ENCODE measurements at regions of chr15 and their contacts with region 1.

Region 1: DNA sequence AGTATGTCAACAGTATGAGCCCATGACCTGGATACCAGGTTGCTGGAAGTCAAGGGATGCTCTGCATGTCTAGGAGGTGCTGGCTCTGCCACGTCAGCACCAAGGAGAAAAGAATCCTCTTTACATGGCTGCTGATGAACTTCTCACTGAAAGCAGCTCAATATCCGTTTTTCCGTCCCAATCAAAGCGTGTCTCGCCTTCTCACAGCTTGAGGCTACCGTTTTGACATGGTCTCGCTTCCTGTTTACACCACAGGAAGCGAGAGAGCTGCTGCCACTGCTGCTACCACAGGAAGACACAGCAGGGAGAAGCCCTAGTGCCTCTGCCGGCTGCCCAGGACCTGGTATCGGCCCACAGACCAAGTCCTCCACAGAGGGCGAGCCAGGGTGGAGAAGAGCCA is 27.3 kb downstream of the STARD5 start:
- DNase-seq: peak; percentile 76
- H3K4me3 Mint-ChIP-seq: peak overlapping the region; percentile 96
- H3K27ac Mint-ChIP-seq: peak overlapping the region; percentile 93
- H3K4me1 Mint-ChIP-seq: peaks cover 90% of the 10 kb centered on the region
- H3K27me3 Mint-ChIP-seq: no peaks in the 10 kb centered on the region

Region 2: GRCh38 chr15:80804965-80805495 is 491.6 kb before region 1 on chr15:
- intact Hi-C with region 1: loop called (anchors 10 kb)
- DNase-seq: peak; percentile 27
- H3K4me3 Mint-ChIP-seq: peak overlapping the region; percentile 19
- H3K27ac Mint-ChIP-seq: peak overlapping the region; percentile 62
- H3K4me1 Mint-ChIP-seq: peaks cover 49% of the 10 kb centered on the region
- H3K27me3 Mint-ChIP-seq: peaks cover 2% of the 10 kb centered on the region

Region 3: GRCh38 chr15:81023483-81024264 is 273.0 kb before region 1 on chr15:
- intact Hi-C with region 1: loop called (anchors 2 kb)
- DNase-seq: peak; percentile 34
- H3K4me3 Mint-ChIP-seq: peak overlapping the region; percentile 10
- H3K27ac Mint-ChIP-seq: peak overlapping the region; percentile 92
- H3K4me1 Mint-ChIP-seq: peaks cover 35% of the 10 kb centered on the region
- H3K27me3 Mint-ChIP-seq: no peaks in the 10 kb centered on the region

Region 4: GRCh38 chr15:81176291-81176893 is 120.3 kb before region 1 on chr15:
- intact Hi-C with region 1: no loop called
- DNase-seq: no peak
- H3K4me3 Mint-ChIP-seq: no peak overlapping the region
- H3K27ac Mint-ChIP-seq: no peak overlapping the region
- H3K4me1 Mint-ChIP-seq: no peaks in the 10 kb centered on the region
- H3K27me3 Mint-ChIP-seq: peaks cover 17% of the 10 kb centered on the region

Region 5: DNA sequence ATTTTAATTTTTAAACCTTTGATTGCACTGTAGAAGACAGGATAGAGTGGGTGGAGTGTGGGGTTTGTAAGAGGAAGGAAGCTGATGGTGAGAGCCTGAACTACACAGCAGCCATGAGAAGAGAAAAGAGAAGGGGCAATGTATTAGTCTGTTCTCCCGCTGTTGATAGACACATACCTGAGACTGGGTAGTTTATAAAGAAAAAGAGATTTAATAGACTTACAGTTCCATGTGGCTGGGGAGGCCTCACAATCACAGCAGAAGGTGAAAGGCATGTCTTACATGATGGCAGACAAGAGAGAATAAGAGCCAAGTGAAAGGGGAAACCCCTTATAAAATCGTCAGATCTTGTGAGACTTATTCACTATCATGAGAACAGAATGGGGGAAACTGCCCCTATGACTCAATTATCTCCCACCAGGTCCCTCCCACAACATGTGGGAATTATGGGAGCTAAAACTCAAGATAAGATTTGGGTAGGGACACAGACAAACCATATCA is 10.0 kb before region 1 on chr15:
- intact Hi-C with region 1: loop called (anchors 1 kb)
- DNase-seq: no peak
- H3K4me3 Mint-ChIP-seq: peak overlapping the region; percentile 23
- H3K27ac Mint-ChIP-seq: peak overlapping the region; percentile 38
- H3K4me1 Mint-ChIP-seq: peaks cover 48% of the 10 kb centered on the region
- H3K27me3 Mint-ChIP-seq: no peaks in the 10 kb centered on the region

Region 6: DNA sequence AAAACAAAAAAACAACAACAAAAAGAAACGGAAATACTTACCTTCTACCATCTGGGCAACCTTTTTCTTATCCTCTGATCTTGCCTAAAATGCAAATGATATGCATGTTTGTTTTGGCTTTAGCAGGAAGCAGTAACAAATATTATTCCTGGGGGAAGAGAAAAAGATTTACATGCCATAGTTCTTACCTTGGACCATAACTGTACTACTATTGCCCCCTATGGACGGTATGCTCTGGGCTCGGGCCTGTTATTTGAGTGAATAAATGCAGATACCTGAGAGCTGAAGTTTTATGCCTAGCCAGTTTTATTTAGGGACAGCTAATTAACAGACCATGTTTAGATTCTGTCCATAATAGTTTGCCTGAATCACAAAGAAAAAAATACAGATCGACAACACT is 39.9 kb after region 1 on chr15:
- intact Hi-C with region 1: loop called (anchors 2 kb)
- DNase-seq: no peak
- H3K4me3 Mint-ChIP-seq: no peak overlapping the region
- H3K27ac Mint-ChIP-seq: no peak overlapping the region
- H3K4me1 Mint-ChIP-seq: peaks cover 2% of the 10 kb centered on the region
- H3K27me3 Mint-ChIP-seq: peaks cover 9% of the 10 kb centered on the region

Measured in activated T-helper 2 cell treated with anti-CD3 and anti-CD28 coated beads, Interferon-gamma antibody, Interleukin-2, Interleukin-4, amounts not matched to agents 10 μg/mL and 5 μg/mL and 100 μg/mL, durations not matched to agents 14 hours and 24 hours and 36 hours (primary cell).